T-cell (primary cell): ENCODE measurements at regions of chrX and their contacts with region 1.

Region 1: GRCh38 chrX:48676106-48676892 is 7.3 kb upstream of the WAS start:
- DNase-seq: peak; percentile 71 to 92 (median 81)
- ATAC-seq: peak; percentile 97 to 99 (median 98)
- H3K4me3 ChIP-seq: peak overlapping the region; percentile 66 to 78
- H3K4me3 Mint-ChIP-seq: peak overlapping the region; percentile 84 to 89 (median 88)
- H3K27ac ChIP-seq: peak overlapping the region; percentile 68
- H3K27ac Mint-ChIP-seq: peak overlapping the region; percentile 87 to 88
- H3K4me1 ChIP-seq: peaks cover 0 to 19% of the 10 kb centered on the region in 2 experiments
- H3K4me1 Mint-ChIP-seq: peaks cover 17 to 28% (median 27%) of the 10 kb centered on the region in 3 donors
- H3K27me3 ChIP-seq: no peaks in the 10 kb centered on the region
- H3K27me3 Mint-ChIP-seq: no peaks in the 10 kb centered on the region

Region 2: GRCh38 chrX:48703642-48704481 is 27.6 kb after region 1 on chrX:
- CTCF ChIA-PET with region 1: no interaction called
- POLR2A ChIA-PET with region 1: no interaction called
- DNase-seq: no peak
- ATAC-seq: no peak
- H3K4me3 ChIP-seq: no peak overlapping the region
- H3K4me3 Mint-ChIP-seq: no peak overlapping the region
- H3K27ac ChIP-seq: no peak overlapping the region
- H3K27ac Mint-ChIP-seq: peak overlapping the region in 1 of 2 donors; percentile 11
- H3K4me1 ChIP-seq: peaks cover 0 to 7% of the 10 kb centered on the region in 2 experiments
- H3K4me1 Mint-ChIP-seq: peaks cover 13 to 28% (median 16%) of the 10 kb centered on the region in 3 donors
- H3K27me3 ChIP-seq: no peaks in the 10 kb centered on the region
- H3K27me3 Mint-ChIP-seq: peaks cover 0 to 4% of the 10 kb centered on the region in 2 donors

Region 3: DNA sequence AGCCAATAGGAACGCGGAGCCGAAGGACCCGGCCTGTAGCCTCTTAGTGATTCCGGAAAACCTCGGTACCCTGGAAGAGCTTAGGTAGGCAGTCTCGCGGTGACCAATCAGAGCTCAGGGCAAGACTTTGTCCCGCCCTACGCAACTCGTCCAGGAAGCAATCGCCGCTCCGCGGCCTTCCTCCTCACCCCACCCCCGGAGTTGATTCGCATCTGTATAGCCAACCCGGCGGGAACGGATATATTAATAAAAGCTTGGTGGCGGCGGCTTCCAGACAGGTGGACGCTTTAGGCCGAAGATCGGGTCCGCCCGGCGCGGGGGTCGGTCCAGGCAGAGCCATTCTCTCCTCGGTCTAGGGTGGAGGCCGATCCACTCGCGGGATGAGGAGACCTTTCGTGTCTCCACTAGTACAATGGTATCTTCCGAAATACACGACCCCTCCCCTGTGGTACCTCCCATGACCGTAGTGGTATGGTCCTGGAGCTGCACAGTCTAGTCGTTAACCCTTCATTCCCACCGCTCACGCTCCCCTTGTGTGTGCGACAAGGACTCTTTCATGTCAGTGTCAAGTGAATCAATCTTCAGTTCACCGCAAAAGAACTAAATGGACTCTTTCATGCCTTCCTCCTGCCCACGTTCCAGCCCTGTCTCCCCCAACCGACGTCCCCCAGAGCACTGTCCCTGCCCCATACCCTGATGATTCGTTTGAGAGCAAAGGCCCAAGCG is 61.1 kb after region 1 on chrX:
- CTCF ChIA-PET with region 1: no interaction called
- POLR2A ChIA-PET with region 1: interaction called in 1 of 2 experiments, 10 read pairs
- DNase-seq: peak; percentile 61 to 94 (median 85)
- ATAC-seq: peak; percentile 95 to 98 (median 98)
- H3K4me3 ChIP-seq: peak overlapping the region; percentile 63 to 76
- H3K4me3 Mint-ChIP-seq: peak overlapping the region; percentile 86 to 96 (median 87)
- H3K27ac ChIP-seq: peak overlapping the region; percentile 93
- H3K27ac Mint-ChIP-seq: peak overlapping the region; percentile 93 to 100
- H3K4me1 ChIP-seq: peaks cover 0 to 18% of the 10 kb centered on the region in 2 experiments
- H3K4me1 Mint-ChIP-seq: peaks cover 18 to 24% (median 23%) of the 10 kb centered on the region in 3 donors
- H3K27me3 ChIP-seq: no peaks in the 10 kb centered on the region
- H3K27me3 Mint-ChIP-seq: no peaks in the 10 kb centered on the region